Sigmoid colon (tissue), 7 donors: ENCODE measurements at regions of chr6 and their contacts with region 1.

Region 1: DNA sequence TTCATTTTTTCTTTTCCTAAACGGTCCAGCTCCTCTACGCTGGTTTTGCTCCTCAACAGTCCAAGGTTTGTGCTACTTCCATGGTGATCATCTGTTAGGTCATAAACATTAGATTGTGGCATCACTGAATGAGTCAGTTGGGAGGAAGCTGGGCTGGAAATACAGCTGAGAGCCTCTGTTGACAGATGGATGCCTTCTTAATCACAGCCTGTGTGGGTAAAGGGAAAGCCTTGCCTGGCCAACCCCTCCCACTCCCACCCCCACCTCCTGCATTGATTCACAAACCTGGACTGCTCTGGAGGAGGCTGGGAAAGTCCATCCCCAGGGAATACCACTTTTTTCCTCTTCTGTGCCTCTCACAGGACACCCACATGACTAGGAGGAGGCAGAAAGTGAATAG is 180.6 kb upstream of the CCN2 start:
- DNase-seq: no peak
- H3K4me3 ChIP-seq: no peak overlapping the region
- H3K27ac ChIP-seq: peak overlapping the region; percentile 82 to 90 (median 89)
- H3K4me1 ChIP-seq: peaks cover 0 to 46% (median 39%) of the 10 kb centered on the region in 4 donors
- H3K27me3 ChIP-seq: no peaks in the 10 kb centered on the region
- CTCF ChIP-seq: no peak
- EP300 ChIP-seq: no peak
- POLR2A ChIP-seq: no peak

Region 2: GRCh38 chr6:131828100-131828499 is 303.7 kb before region 1 on chr6:
- intact Hi-C with region 1: no loop called
- DNase-seq: no peak
- H3K4me3 ChIP-seq: no peak overlapping the region
- H3K27ac ChIP-seq: no peak overlapping the region
- H3K4me1 ChIP-seq: no peaks in the 10 kb centered on the region
- H3K27me3 ChIP-seq: no peaks in the 10 kb centered on the region
- CTCF ChIP-seq: no peak
- EP300 ChIP-seq: no peak
- POLR2A ChIP-seq: no peak

Region 3: DNA sequence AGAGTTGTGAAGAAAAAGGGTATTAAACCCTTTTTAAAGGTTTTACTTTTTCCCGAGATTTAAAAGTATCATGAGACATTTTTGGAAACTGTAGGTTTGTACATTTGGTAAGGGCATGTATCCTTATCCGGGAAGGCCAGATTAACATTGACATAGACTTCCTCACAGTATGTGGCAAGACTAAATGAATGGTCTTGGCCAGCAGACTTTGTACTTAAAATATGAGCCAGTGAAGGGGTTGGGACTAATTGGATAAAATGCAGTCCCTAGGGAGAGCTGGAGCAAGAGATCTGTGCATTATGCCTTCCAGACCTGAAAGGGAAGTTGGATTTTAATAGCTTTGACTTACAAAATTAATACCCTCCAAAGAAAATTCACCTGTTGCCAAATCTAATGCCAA is 120.2 kb before region 1 on chr6:
- intact Hi-C with region 1: loop called (anchors 5 kb)
- DNase-seq: no peak
- H3K4me3 ChIP-seq: no peak overlapping the region
- H3K27ac ChIP-seq: peak overlapping the region in 3 of 4 donors; percentile 57 to 74 (median 61)
- H3K4me1 ChIP-seq: peaks cover 0 to 28% (median 12%) of the 10 kb centered on the region in 4 donors
- H3K27me3 ChIP-seq: no peaks in the 10 kb centered on the region
- CTCF ChIP-seq: no peak
- EP300 ChIP-seq: no peak
- POLR2A ChIP-seq: no peak

Region 4: GRCh38 chr6:132067286-132067685 is 64.5 kb before region 1 on chr6:
- intact Hi-C with region 1: no loop called
- DNase-seq: no peak
- H3K4me3 ChIP-seq: no peak overlapping the region
- H3K27ac ChIP-seq: no peak overlapping the region
- H3K4me1 ChIP-seq: peaks cover 0 to 26% (median 15%) of the 10 kb centered on the region in 4 donors
- H3K27me3 ChIP-seq: no peaks in the 10 kb centered on the region
- CTCF ChIP-seq: no peak
- EP300 ChIP-seq: no peak
- POLR2A ChIP-seq: no peak

Region 5: GRCh38 chr6:132401120-132401945 is 269.6 kb after region 1 on chr6 and contains the start of gene MOXD1:
- intact Hi-C with region 1: no loop called
- DNase-seq: peak; percentile 77
- H3K4me3 ChIP-seq: peak within 1 kb of the TSS; percentile 45 to 73 (median 68)
- H3K27ac ChIP-seq: peak within 1 kb of the TSS; percentile 59 to 73 (median 67)
- H3K4me1 ChIP-seq: peaks cover 0 to 18% (median 14%) of the 10 kb centered on the region in 4 donors
- H3K27me3 ChIP-seq: peaks cover 0 to 12% (median 9%) of the 10 kb centered on the region in 3 donors
- CTCF ChIP-seq: peak in 1 of 4 experiments; percentile 1
- EP300 ChIP-seq: no peak
- POLR2A ChIP-seq: no peak
- total RNA-seq, gene MOXD1: 9.4 to 20.8 (median 11.7) TPM

Region 6: DNA sequence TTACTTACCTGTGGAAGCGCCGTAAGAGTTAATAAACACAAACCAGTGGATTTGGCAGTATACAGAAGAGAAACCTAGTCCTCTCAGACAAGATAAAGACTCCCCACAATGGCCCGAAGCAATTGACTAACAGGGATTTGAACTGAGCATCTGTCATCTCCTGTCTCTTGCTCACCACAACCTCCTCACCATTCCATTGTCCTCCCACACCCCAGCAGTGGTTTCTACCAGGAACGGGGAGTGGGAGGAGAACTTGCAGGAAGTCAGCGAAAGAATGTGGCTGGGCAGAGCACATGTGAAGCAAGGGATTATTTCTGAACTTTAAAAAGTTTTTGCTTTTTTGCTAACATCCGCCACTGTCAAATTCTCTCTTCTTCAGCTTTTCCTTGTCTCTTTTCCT is 551.8 kb after region 1 on chr6:
- intact Hi-C with region 1: no loop called
- DNase-seq: no peak
- H3K4me3 ChIP-seq: no peak overlapping the region
- H3K27ac ChIP-seq: no peak overlapping the region
- H3K4me1 ChIP-seq: no peaks in the 10 kb centered on the region
- H3K27me3 ChIP-seq: no peaks in the 10 kb centered on the region
- CTCF ChIP-seq: no peak
- EP300 ChIP-seq: no peak
- POLR2A ChIP-seq: no peak